ENCODE measurements at regions of chr18 and their contacts with region 1.

Region 1: GRCh38 chr18:56019908-56020307 is 431.9 kb upstream of the TCF4 start:
- DNase-seq: no peak
- ATAC-seq: no peak
- H3K4me3 ChIP-seq: no peak overlapping the region
- H3K27ac ChIP-seq: no peak overlapping the region
- H3K4me1 ChIP-seq: peaks cover 0 to 10% (median 0%) of the 10 kb centered on the region in 12 donors
- H3K27me3 ChIP-seq: no peaks in the 10 kb centered on the region
- CTCF ChIP-seq: no peak
- POLR2A ChIP-seq: no peak

Region 2: GRCh38 chr18:55968550-55968949 is 51.4 kb before region 1 on chr18:
- intact Hi-C with region 1: loop called in 1 of 10 experiments (anchors 10 kb)
- DNase-seq: no peak
- ATAC-seq: no peak
- H3K4me3 ChIP-seq: no peak overlapping the region
- H3K27ac ChIP-seq: no peak overlapping the region
- H3K4me1 ChIP-seq: no peaks in the 10 kb centered on the region
- H3K27me3 ChIP-seq: no peaks in the 10 kb centered on the region
- CTCF ChIP-seq: no peak
- POLR2A ChIP-seq: no peak

Measured in heart left ventricle (tissue), 16 donors.